ENCODE measurements at regions of chrX and their contacts with region 1.

Region 1: DNA sequence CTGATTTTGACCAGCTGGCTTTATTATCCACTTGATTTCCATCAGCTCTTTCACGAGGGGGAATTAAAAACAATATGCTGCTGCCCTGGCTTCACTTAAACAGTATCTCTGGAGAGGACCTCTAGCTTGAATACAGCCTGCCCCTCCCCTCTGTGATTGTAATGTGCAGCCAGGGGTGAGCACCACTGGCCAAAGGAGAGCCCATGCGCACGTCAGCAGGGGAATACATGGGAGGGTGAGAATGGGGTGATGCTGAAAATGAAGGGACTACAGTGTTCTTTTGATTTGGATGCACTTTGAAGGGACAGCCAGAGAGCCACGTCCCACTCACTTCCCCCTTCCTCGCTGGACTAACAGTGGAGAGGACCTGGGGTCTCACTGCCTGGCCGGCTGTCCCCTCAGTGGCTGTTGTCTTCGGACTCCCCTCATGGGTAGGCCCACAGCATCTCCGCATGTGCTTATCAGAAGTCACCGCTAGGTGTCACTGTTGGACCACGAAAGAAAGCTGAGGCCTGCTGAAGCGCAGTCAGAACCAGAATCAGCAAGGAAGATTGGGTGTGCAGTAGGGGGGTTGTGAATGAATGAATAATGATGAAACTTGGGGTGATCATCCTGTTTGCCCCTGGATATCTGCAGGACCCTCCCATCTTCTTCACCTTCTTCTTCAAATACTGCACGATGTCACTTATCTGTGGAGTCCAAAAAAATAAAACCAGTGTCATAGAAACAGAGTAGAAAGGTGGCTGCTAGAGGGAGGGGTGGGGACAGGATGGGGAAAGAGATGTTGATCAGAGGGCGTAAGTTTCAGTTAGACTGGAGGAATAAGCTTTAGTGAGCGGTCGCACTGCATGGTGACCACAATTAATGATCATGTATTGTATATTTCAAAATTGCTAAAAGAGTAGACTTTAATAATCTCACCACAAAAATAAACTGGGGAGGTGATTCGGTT is 32.8 kb downstream of the CLCN4 start:
- DNase-seq: peak; percentile 80
- ATAC-seq: peak; percentile 76
- H3K4me3 ChIP-seq: no peak overlapping the region
- H3K4me3 Mint-ChIP-seq: no peak overlapping the region
- H3K27ac ChIP-seq: no peak overlapping the region
- H3K27ac Mint-ChIP-seq: peak overlapping the region; percentile 32
- H3K4me1 ChIP-seq: no peaks in the 10 kb centered on the region
- H3K4me1 Mint-ChIP-seq: peaks cover 14% of the 10 kb centered on the region
- H3K27me3 ChIP-seq: no peaks in the 10 kb centered on the region
- H3K27me3 Mint-ChIP-seq: no peaks in the 10 kb centered on the region
- CTCF ChIP-seq: peak; percentile 51

Region 2: GRCh38 chrX:9429781-9430180 is 759.8 kb before region 1 on chrX:
- CTCF ChIA-PET with region 1: no interaction called
- POLR2A ChIA-PET with region 1: no interaction called
- intact Hi-C with region 1: no loop called
- DNase-seq: no peak
- ATAC-seq: no peak
- H3K4me3 ChIP-seq: no peak overlapping the region
- H3K4me3 Mint-ChIP-seq: no peak overlapping the region
- H3K27ac ChIP-seq: no peak overlapping the region
- H3K27ac Mint-ChIP-seq: no peak overlapping the region
- H3K4me1 ChIP-seq: no peaks in the 10 kb centered on the region
- H3K4me1 Mint-ChIP-seq: no peaks in the 10 kb centered on the region
- H3K27me3 ChIP-seq: no peaks in the 10 kb centered on the region
- H3K27me3 Mint-ChIP-seq: no peaks in the 10 kb centered on the region
- CTCF ChIP-seq: no peak

Region 3: DNA sequence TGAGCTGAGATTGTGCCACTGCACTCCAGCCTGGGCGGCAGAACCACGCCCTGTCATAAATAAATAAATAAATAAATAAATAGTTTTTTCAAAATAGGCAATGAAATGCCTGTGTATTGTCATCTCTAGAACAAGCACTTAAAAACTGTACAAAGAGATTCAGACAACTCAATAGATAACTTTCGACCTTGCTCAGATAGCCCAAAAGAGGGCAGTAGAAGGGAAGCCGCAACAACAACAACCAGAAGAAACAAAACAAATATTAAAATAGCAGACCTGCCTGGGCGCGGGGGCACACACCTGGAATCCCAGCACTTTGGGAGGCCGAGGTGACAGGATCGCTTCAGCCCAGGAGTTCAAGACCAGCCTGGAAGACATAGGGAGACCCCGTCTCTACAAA is 231.8 kb before region 1 on chrX:
- CTCF ChIA-PET with region 1: no interaction called
- POLR2A ChIA-PET with region 1: no interaction called
- intact Hi-C with region 1: no loop called
- DNase-seq: no peak
- ATAC-seq: no peak
- H3K4me3 ChIP-seq: no peak overlapping the region
- H3K4me3 Mint-ChIP-seq: no peak overlapping the region
- H3K27ac ChIP-seq: no peak overlapping the region
- H3K27ac Mint-ChIP-seq: no peak overlapping the region
- H3K4me1 ChIP-seq: peaks cover 3 to 5% of the 10 kb centered on the region in 2 donors
- H3K4me1 Mint-ChIP-seq: peaks cover 6% of the 10 kb centered on the region
- H3K27me3 ChIP-seq: no peaks in the 10 kb centered on the region
- H3K27me3 Mint-ChIP-seq: no peaks in the 10 kb centered on the region
- CTCF ChIP-seq: no peak

Region 4: DNA sequence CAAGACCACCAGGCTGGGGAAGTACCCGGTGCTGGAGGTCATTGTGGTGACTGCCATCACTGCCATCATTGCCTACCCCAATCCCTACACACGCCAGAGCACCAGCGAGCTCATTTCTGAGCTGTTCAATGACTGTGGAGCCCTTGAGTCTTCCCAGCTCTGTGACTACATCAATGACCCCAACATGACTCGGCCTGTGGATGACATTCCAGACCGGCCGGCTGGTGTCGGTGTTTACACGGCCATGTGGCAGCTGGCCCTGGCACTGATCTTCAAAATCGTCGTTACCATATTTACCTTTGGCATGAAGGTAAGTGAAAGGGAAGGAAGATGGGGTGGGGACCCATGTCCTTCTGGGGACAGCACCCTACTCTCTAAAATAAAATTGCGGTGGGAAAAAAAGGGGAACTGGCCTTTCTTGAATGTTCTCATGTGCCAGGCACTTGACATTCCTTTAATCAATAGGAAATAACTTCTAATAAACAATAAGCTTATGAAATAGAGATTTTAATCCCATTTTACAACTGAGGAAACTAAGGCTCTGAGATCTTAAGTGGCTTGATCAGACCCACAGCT is 18.8 kb after region 1 on chrX:
- CTCF ChIA-PET with region 1: interaction called, 10 read pairs
- POLR2A ChIA-PET with region 1: no interaction called
- intact Hi-C with region 1: no loop called
- DNase-seq: peak; percentile 43
- ATAC-seq: peak; percentile 17
- H3K4me3 ChIP-seq: no peak overlapping the region
- H3K4me3 Mint-ChIP-seq: no peak overlapping the region
- H3K27ac ChIP-seq: peak overlapping the region; percentile 66 to 80
- H3K27ac Mint-ChIP-seq: no peak overlapping the region
- H3K4me1 ChIP-seq: peaks cover 11 to 12% of the 10 kb centered on the region in 2 donors
- H3K4me1 Mint-ChIP-seq: peaks cover 14% of the 10 kb centered on the region
- H3K27me3 ChIP-seq: no peaks in the 10 kb centered on the region
- H3K27me3 Mint-ChIP-seq: no peaks in the 10 kb centered on the region
- CTCF ChIP-seq: no peak

Region 5: GRCh38 chrX:10223276-10223675 is 33.7 kb after region 1 on chrX:
- CTCF ChIA-PET with region 1: interaction called, 14 read pairs
- POLR2A ChIA-PET with region 1: no interaction called
- intact Hi-C with region 1: no loop called
- DNase-seq: no peak
- ATAC-seq: no peak
- H3K4me3 ChIP-seq: no peak overlapping the region
- H3K4me3 Mint-ChIP-seq: no peak overlapping the region
- H3K27ac ChIP-seq: no peak overlapping the region
- H3K27ac Mint-ChIP-seq: peak overlapping the region; percentile 50
- H3K4me1 ChIP-seq: peaks cover 0 to 9% of the 10 kb centered on the region in 2 donors
- H3K4me1 Mint-ChIP-seq: peaks cover 22% of the 10 kb centered on the region
- H3K27me3 ChIP-seq: no peaks in the 10 kb centered on the region
- H3K27me3 Mint-ChIP-seq: no peaks in the 10 kb centered on the region
- CTCF ChIP-seq: no peak

Region 6: GRCh38 chrX:10597871-10598270 is 408.3 kb after region 1 on chrX:
- CTCF ChIA-PET with region 1: interaction called, 133 read pairs
- POLR2A ChIA-PET with region 1: no interaction called
- intact Hi-C with region 1: no loop called
- DNase-seq: peak; percentile 48
- ATAC-seq: no peak
- H3K4me3 ChIP-seq: no peak overlapping the region
- H3K4me3 Mint-ChIP-seq: no peak overlapping the region
- H3K27ac ChIP-seq: no peak overlapping the region
- H3K27ac Mint-ChIP-seq: no peak overlapping the region
- H3K4me1 ChIP-seq: no peaks in the 10 kb centered on the region
- H3K4me1 Mint-ChIP-seq: no peaks in the 10 kb centered on the region
- H3K27me3 ChIP-seq: no peaks in the 10 kb centered on the region
- H3K27me3 Mint-ChIP-seq: no peaks in the 10 kb centered on the region
- CTCF ChIP-seq: peak; percentile 27

Region 7: DNA sequence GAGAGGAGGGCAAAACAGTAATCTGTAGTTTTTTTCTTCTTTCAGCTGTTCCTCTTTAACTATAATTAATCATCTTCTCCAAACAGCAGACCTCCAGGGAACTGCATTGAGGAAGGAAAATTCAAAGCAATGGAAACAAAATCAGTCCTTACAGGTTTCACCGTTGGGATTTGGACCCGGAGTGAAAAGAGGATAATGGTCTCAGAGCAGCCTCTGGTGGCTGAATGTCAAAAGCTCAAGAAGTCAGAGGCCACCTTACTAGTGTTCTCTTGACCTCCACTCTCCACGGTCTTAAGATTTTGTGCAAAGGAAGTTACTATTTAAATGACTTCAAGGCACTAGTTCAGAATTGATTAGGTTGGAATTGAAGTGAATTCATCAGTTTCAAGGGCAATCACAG is 446.7 kb after region 1 on chrX:
- CTCF ChIA-PET with region 1: interaction called, 10 read pairs
- POLR2A ChIA-PET with region 1: no interaction called
- intact Hi-C with region 1: no loop called
- DNase-seq: no peak
- ATAC-seq: no peak
- H3K4me3 ChIP-seq: no peak overlapping the region
- H3K4me3 Mint-ChIP-seq: no peak overlapping the region
- H3K27ac ChIP-seq: no peak overlapping the region
- H3K27ac Mint-ChIP-seq: no peak overlapping the region
- H3K4me1 ChIP-seq: no peaks in the 10 kb centered on the region
- H3K4me1 Mint-ChIP-seq: no peaks in the 10 kb centered on the region
- H3K27me3 ChIP-seq: no peaks in the 10 kb centered on the region
- H3K27me3 Mint-ChIP-seq: peaks cover 4% of the 10 kb centered on the region
- CTCF ChIP-seq: no peak

Region 8: GRCh38 chrX:10728806-10729389 is 539.3 kb after region 1 on chrX:
- CTCF ChIA-PET with region 1: interaction called, 130 read pairs
- POLR2A ChIA-PET with region 1: no interaction called
- intact Hi-C with region 1: no loop called
- DNase-seq: no peak
- ATAC-seq: no peak
- H3K4me3 ChIP-seq: no peak overlapping the region
- H3K4me3 Mint-ChIP-seq: no peak overlapping the region
- H3K27ac ChIP-seq: no peak overlapping the region
- H3K27ac Mint-ChIP-seq: no peak overlapping the region
- H3K4me1 ChIP-seq: no peaks in the 10 kb centered on the region
- H3K4me1 Mint-ChIP-seq: no peaks in the 10 kb centered on the region
- H3K27me3 ChIP-seq: peaks cover 0 to 6% (median 0%) of the 10 kb centered on the region in 4 experiments
- H3K27me3 Mint-ChIP-seq: no peaks in the 10 kb centered on the region
- CTCF ChIP-seq: no peak

Region 9: GRCh38 chrX:11137543-11138139 is 948.0 kb after region 1 on chrX:
- CTCF ChIA-PET with region 1: interaction called, 39 read pairs
- POLR2A ChIA-PET with region 1: no interaction called
- intact Hi-C with region 1: loop called (anchors 1 kb)
- DNase-seq: peak; percentile 57
- ATAC-seq: no peak
- H3K4me3 ChIP-seq: no peak overlapping the region
- H3K4me3 Mint-ChIP-seq: no peak overlapping the region
- H3K27ac ChIP-seq: no peak overlapping the region
- H3K27ac Mint-ChIP-seq: no peak overlapping the region
- H3K4me1 ChIP-seq: no peaks in the 10 kb centered on the region
- H3K4me1 Mint-ChIP-seq: no peaks in the 10 kb centered on the region
- H3K27me3 ChIP-seq: peaks cover 0 to 2% (median 0%) of the 10 kb centered on the region in 4 experiments
- H3K27me3 Mint-ChIP-seq: no peaks in the 10 kb centered on the region
- CTCF ChIP-seq: peak; percentile 74

Measured in B cell (primary cell).